ENCODE measurements at regions of chr16 and their contacts with region 1.

Region 1: DNA sequence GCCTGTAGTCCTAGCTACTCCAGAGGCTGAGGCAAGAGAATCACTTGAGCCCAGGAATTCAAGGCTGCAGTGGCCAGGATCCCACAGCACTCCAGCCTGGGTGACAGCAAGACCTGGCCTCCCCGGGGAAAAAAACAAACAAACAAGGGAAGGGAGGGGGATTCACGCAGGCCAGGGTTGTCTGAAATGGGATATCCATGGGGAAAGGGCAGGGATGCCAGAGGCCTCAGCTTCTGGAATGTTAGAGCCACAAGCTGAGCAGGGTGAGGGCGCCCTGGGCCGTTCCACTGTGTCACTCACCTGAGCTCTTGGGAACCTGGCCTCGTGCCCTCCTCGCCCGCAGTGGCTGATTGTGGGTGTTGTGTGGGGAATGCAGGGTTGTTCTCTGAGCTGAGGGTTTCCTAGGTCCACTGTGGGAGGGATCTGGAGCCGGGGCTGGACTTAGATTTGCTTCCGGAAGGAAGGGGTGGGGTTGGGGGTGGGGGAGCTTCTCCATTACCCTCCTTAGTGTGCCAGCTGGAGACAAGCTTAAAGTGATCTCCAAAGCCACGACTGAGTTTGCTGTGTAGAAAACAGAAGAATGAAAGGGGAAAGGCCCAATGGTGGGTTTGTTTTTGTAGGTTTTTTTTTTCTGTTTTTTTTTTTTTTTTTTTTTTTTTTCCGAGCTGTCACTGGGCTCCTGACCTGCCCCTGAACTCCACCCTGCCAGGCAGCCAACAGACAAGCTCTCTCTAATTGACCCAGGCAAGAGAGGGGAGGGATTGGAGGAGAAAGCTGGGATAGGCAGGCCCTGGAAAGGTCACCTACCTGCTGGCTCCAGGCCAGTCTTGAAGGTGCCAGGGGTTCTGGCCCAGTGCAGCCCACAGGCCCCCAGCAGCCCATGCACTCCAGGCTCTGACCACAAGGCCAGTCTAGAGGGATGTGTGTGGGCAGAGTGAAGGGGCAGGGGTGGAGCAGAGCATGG is at the start of gene SULT1A1:
- DNase-seq: no peak
- H3K4me3 ChIP-seq: no peak within 1 kb of the TSS
- CTCF ChIP-seq: no peak

Region 2: GRCh38 chr16:28524681-28525171 is 85.2 kb before region 1 on chr16:
- in situ Hi-C with region 1: no loop called
- DNase-seq: no peak
- H3K4me3 ChIP-seq: no peak overlapping the region
- CTCF ChIP-seq: no peak

Region 3: GRCh38 chr16:28543072-28543471 is 66.8 kb before region 1 on chr16:
- in situ Hi-C with region 1: loop called (anchors 5 kb)
- DNase-seq: no peak
- H3K4me3 ChIP-seq: no peak overlapping the region
- CTCF ChIP-seq: no peak

Measured in astrocyte of the cerebellum (primary cell).